ENCODE measurements at regions of chr4 and their contacts with region 1.

Region 1: DNA sequence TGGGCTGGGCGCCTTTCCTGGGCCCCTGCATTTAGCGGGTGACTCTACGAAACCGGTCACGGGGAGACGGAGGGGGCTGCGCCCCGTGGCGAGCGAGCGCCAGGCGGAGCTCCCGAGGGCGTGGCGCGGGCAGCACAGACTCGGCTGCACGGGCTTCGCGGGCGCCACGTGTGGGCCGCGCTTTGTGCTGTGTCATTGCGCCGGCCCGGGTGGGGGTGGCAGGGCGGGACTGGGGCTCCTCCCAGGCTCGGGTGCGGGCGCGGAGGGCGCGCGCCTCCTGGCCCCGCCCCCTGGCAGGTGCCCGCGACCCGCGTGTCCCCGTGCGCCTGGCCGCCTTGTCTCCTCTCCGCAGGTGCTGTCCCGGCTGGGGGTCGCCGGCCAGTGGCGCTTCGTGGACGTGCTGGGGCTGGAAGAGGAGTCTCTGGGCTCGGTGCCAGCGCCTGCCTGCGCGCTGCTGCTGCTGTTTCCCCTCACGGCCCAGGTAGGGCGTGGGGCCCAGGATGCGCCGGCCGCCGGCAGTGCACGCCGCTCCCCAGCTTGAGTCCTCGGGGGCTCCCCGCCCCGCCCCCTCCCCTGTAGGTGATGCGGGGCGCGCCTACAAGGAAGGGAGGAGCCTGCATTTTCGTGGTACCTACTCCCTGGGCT is 651 bp downstream of the UCHL1 start:
- DNase-seq: no peak
- H3K4me3 ChIP-seq: peak overlapping the region; percentile 74
- CTCF ChIP-seq: no peak

Region 2: DNA sequence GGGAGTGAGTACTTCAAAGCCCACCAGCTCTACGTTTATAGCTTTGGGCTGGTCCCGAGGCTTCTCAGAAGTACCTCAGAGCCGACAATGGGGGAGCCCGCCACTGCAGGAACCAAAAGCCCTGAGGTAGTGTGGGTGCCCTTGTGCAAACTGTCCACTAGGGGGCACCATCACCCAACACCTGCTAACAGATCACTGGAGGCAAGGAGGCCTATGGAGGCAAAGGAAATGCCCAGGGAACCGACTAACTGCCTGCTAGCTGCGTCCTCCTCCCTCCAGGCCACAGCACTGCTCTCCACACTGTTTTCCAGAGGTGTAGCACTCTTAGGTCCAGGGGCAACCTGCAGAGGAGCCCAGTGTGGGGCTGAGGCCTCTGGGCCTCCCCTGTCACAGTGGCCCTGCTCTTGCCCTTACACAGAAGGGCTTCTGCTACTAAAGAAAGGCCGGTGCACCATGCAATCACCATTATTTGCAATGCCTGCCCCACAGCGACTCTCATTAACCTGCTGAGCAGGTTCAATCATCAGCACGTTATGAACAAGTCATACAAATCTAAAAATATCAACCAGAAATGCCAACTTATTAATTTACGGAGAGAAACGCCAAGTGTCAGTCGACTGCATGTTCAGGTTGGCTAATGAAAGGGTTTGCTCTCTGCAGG is 348.5 kb before region 1 on chr4:
- CTCF ChIA-PET with region 1: interaction called, 17 read pairs
- POLR2A ChIA-PET with region 1: no interaction called
- DNase-seq: peak; percentile 7
- H3K4me3 ChIP-seq: no peak overlapping the region
- CTCF ChIP-seq: peak; percentile 87

Region 3: DNA sequence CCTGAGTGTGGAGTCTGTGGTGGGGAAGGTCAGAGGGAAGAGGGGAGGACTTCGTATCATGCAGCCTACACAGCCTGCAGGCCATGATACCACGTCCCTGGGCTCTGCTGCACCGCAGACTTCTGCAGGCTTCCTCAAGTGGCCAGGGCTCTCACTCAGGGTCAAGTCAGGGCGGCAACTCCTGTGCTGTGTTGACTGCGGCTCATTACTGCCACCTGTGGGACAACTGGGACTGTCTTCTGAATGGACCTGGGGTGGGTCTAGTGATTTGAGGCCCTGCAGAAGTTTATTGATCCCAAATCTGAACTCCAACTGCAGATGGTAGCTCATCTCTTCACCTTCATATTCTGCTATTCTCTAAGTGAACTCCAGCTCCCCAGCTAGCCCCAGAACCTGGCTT is 340.5 kb before region 1 on chr4:
- CTCF ChIA-PET with region 1: interaction called, 46 read pairs
- POLR2A ChIA-PET with region 1: interaction called, 10 read pairs
- DNase-seq: no peak
- H3K4me3 ChIP-seq: no peak overlapping the region
- CTCF ChIP-seq: no peak

Region 4: GRCh38 chr4:40992472-40993295 is 264.7 kb before region 1 on chr4:
- CTCF ChIA-PET with region 1: no interaction called
- POLR2A ChIA-PET with region 1: interaction called, 16 read pairs
- DNase-seq: no peak
- H3K4me3 ChIP-seq: no peak overlapping the region
- CTCF ChIP-seq: no peak

Region 5: GRCh38 chr4:41268022-41268421 is 10.6 kb after region 1 on chr4:
- CTCF ChIA-PET with region 1: interaction called, 5 read pairs
- POLR2A ChIA-PET with region 1: interaction called, 13 read pairs
- DNase-seq: no peak
- H3K4me3 ChIP-seq: no peak overlapping the region
- CTCF ChIP-seq: no peak

Region 6: DNA sequence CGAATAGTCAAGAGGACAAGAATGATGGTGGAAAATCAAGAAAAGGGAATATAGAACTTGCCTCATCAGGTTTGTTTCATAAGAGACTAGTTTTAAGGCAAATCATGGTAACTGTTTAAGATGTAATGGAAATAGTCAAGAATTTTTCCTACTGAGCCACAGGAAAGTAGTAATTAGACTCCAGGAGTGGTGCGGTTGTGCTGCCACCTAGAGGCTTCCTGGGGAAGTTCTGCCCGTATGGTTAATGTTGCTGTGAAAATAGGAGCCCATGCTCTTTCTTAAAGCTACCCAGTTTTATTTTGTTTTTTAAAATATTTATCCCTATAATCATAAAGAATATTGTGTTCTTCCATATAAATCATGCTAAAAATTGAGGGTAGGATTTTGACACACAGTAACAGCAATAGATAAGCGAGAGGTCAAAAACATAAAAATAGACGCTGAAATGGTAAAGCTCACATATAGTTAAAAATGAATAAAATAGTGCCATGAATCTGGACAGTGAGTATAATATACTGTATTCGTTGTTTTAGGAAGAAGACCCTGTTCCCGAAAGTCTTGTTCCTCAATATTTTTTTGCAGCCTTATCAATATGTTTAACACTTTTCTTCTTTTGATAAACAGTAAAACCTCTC is 404.2 kb after region 1 on chr4:
- CTCF ChIA-PET with region 1: interaction called, 17 read pairs
- POLR2A ChIA-PET with region 1: no interaction called
- DNase-seq: no peak
- H3K4me3 ChIP-seq: no peak overlapping the region
- CTCF ChIP-seq: peak; percentile 83